ENCODE measurements at regions of chr17 and their contacts with region 1.

Region 1: DNA sequence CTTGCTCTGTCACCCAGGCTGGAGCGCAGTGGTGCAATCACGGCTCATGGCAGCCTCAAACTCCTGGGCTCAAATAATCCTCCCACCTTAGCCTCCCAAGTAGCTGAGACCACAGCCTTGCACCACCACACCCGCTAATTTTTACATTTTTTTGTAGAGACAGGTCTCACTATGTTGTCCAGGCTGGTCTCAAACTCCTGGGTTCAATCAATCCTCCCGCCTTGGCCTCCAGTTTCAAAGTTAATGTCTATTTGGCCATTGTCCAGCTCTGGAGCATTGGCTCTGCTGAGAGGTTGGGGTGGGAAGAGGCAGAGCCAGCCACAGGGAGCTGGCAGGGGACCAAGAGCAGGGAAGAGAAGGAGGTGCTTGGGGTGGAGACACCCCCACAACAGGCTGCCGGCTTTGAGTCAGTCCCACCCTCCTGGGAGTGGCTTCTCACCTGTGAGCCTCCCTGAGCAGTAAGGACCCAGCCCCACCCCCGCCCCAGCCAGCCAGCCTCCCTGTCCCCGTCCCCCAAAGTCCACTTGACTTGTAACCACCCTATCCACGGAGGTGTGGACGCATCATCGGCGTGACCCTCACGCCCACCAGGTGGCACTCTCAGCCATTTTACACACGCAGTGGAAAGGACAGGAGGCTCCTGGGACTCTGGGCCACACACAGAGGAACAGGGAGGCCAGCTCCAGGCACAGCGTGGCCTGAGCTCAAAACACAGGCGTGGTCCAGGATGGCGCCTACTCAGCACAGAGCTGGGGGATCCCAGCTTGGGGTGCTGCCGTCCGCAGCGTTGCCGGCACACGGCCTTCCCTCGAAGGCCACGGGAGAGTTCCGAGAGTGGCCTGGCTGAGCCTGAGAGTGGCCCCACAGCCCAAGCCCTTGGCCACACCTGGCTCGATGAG is 22.8 kb upstream of the PVALEF start:
- DNase-seq: peak; percentile 76 to 91 (median 79)
- ATAC-seq: peak; percentile 100
- H3K4me3 ChIP-seq: no peak overlapping the region
- H3K27ac ChIP-seq: no peak overlapping the region
- H3K4me1 ChIP-seq: peaks cover 9 to 31% of the 10 kb centered on the region in 2 experiments; a peak in 3 of 5 replicates
- H3K27me3 ChIP-seq: peaks cover 0 to 26% of the 10 kb centered on the region in 2 experiments; a peak in 1 of 5 replicates
- CTCF ChIP-seq: peak; percentile 80 to 89 (median 86)
- EP300 ChIP-seq: 0 out of 2 replicates have a peak, but pooled peaks have one; percentile 10
- POLR2A ChIP-seq: no peak
- RAD21 ChIP-seq: peak; percentile 76 to 93

Region 2: DNA sequence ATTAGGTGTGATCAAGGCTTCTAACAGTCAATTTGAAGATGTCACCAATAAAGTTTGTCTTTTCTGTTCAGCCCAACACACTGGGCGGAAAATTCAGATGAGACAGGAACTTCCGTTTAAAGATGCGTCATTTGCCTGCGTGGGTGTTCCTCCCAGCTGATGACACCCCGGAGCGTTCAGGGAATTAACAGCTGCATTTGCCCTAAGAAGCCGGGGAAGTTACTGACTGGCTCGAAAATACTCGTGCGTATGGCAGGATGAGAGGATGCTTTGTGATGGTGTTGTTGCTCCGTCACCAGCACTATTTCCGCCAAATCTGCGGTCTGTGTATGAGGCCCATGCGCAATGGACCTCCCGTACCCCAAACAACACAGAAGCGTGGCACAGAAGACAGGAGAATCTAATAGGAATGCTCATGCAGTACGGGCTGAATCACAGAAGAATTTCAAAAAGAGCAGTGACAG is 10.8 kb after region 1 on chr17:
- CTCF ChIA-PET with region 1: no interaction called
- POLR2A ChIA-PET with region 1: interaction called, 15 read pairs
- in situ Hi-C with region 1: no loop called
- intact Hi-C with region 1: no loop called
- DNase-seq: peak; percentile 66 to 79 (median 74)
- ATAC-seq: peak; percentile 77
- H3K4me3 ChIP-seq: no peak overlapping the region
- H3K27ac ChIP-seq: no peak overlapping the region; the same call in 2 of the 3 replicates
- H3K4me1 ChIP-seq: peaks cover 6 to 34% of the 10 kb centered on the region in 2 experiments; a peak in 3 of 5 replicates
- H3K27me3 ChIP-seq: peaks cover 24 to 62% of the 10 kb centered on the region in 2 experiments; a peak in 4 of 5 replicates
- CTCF ChIP-seq: no peak
- EP300 ChIP-seq: peak; percentile 60
- POLR2A ChIP-seq: no peak
- RAD21 ChIP-seq: no peak

Region 3: GRCh38 chr17:81165246-81166032 is 22.9 kb after region 1 on chr17 and contains the start of gene PVALEF:
- CTCF ChIA-PET with region 1: no interaction called
- POLR2A ChIA-PET with region 1: no interaction called
- in situ Hi-C with region 1: no loop called
- intact Hi-C with region 1: no loop called
- DNase-seq: no peak
- ATAC-seq: no peak; the same call in 2 of the 3 replicates
- H3K4me3 ChIP-seq: no peak within 1 kb of the TSS
- H3K27ac ChIP-seq: no peak within 1 kb of the TSS
- H3K4me1 ChIP-seq: peaks cover 0 to 60% of the 10 kb centered on the region in 2 experiments; a peak in 2 of 5 replicates
- H3K27me3 ChIP-seq: peaks cover 25 to 72% of the 10 kb centered on the region in 2 experiments; a peak in 4 of 5 replicates
- CTCF ChIP-seq: no peak
- EP300 ChIP-seq: no peak
- POLR2A ChIP-seq: no peak
- RAD21 ChIP-seq: no peak
- polyA plus RNA-seq, gene PVALEF: not detected

Region 4: DNA sequence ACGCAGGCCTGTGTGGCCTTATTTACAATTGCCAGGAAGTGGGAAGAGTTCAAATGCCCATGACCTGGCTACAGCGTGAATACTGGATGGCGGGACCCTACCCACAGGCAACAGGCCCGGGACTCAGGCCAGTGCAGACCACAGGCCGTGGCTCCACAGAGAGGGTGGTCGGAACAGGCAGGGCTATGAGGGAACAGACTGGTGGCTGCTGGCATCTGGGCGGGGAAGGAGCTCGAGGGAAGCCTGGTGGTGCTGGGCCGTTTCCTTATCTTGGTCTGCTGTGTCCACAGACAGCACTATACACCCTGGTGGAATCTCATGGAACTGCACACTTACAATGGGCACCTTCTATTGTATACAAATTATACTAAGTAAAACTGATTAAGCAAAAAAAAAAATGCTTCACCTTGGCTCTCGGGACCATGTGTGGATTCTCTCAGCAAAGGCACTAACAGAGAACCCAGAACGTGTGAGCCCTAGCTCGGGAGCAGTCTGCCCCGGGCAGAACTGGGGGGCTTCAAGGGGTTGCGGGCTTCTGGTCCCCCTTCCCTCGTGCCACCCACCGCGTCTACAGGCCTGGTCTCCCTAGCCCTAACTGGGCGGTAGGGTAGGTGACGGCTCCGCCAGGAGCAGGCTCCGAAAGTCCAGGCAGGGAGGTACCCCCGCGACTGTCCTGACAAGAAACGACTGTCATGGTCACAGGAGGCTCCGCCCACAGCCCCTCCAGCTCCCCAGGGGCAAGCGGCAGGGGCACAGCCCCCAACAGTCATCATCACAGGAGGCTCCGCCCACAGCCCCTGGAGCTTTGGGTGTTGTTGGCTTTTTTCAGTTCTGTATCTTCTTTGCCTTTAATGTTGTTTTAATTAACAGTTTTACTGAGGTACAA is 58.4 kb after region 1 on chr17:
- CTCF ChIA-PET with region 1: interaction called, 4 read pairs
- POLR2A ChIA-PET with region 1: interaction called, 3 read pairs
- in situ Hi-C with region 1: no loop called
- intact Hi-C with region 1: loop called (anchors 2 kb)
- DNase-seq: peak; percentile 65 to 82 (median 75)
- ATAC-seq: peak; percentile 98
- H3K4me3 ChIP-seq: no peak overlapping the region
- H3K27ac ChIP-seq: no peak overlapping the region
- H3K4me1 ChIP-seq: peaks cover 3 to 31% of the 10 kb centered on the region in 2 experiments; a peak in 3 of 5 replicates
- H3K27me3 ChIP-seq: no peaks in the 10 kb centered on the region
- CTCF ChIP-seq: peak; percentile 73 to 81 (median 78)
- EP300 ChIP-seq: no peak
- POLR2A ChIP-seq: no peak
- RAD21 ChIP-seq: peak; percentile 41 to 66

Region 5: DNA sequence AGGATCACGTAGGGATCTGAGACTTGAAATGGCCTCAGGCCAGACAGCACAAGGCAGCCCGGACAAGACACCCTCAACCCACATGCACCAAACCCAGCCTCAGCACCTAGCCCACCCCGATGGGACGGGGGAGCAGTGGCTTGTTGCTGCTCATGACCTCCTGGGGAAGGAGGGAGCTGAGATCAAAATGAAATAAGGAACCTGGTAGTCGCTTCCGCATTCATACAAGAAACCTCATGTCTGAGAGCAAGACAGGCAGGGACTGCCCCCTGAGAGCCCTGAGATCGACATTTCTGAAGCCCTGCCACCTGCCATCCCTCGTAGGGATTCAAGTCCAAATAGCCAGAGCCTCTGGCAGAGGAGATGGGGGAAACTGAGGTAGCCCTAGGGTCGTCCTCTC is 85.9 kb after region 1 on chr17:
- CTCF ChIA-PET with region 1: interaction called, 8 read pairs
- POLR2A ChIA-PET with region 1: no interaction called
- in situ Hi-C with region 1: loop called (anchors 25 kb)
- intact Hi-C with region 1: loop called (anchors 5 kb)
- DNase-seq: no peak
- ATAC-seq: no peak
- H3K4me3 ChIP-seq: no peak overlapping the region
- H3K27ac ChIP-seq: no peak overlapping the region
- H3K4me1 ChIP-seq: peaks cover 12 to 42% of the 10 kb centered on the region in 2 experiments
- H3K27me3 ChIP-seq: no peaks in the 10 kb centered on the region
- CTCF ChIP-seq: no peak
- EP300 ChIP-seq: no peak
- POLR2A ChIP-seq: no peak
- RAD21 ChIP-seq: no peak

Region 6: DNA sequence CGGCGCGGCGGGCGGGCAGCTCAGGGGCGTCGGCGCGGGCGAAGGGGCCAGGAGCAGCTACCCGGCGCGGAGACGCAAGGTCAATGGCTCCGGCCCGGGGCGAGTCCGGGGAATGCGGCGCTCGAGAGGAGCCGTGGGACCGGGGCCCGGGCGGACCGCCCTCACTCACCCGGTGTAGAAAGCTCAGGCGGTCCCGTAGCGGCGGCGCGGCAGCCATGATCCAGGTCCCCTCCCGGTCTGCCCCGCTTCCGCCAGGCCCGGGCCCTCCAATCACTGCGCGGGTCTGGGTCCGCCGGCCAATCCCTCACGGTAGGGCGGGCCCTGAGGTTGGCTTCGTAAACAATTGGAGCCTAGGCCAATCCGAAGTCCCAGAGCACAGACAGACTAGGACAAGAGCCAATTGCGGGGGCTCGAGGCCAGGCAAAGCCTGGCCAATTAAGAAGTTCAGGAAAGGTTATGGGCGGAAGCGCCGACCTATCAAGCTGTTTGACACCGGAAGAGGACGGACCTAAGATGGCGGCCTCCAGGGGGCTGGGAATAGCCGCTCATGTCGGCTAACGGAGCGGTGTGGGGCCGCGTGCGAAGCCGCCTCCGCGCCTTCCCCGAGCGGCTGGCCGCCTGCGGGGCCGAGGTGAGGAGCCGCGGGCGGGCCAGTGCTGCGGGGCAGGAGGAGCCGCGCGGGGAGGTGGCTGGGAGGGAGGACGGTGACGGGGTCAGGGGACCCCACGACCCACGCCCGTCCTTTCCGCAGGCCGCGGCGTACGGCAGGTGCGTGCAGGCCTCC is 96.5 kb after region 1 on chr17 and contains the starts of genes NDUFAF8 and TEPSIN:
- CTCF ChIA-PET with region 1: interaction called, 17 read pairs
- POLR2A ChIA-PET with region 1: no interaction called
- in situ Hi-C with region 1: loop called (anchors 25 kb)
- intact Hi-C with region 1: loop called (anchors 1 kb)
- DNase-seq: peak; percentile 97 to 100 (median 98)
- ATAC-seq: peak; percentile 97
- H3K4me3 ChIP-seq: peak within 1 kb of the TSS; percentile 82
- H3K27ac ChIP-seq: peak within 1 kb of the TSS; percentile 82
- H3K4me1 ChIP-seq: peaks cover 28 to 89% of the 10 kb centered on the region in 2 experiments
- H3K27me3 ChIP-seq: no peaks in the 10 kb centered on the region
- CTCF ChIP-seq: no peak
- EP300 ChIP-seq: no peak
- POLR2A ChIP-seq: peak; percentile 75
- RAD21 ChIP-seq: no peak
- polyA plus RNA-seq, gene NDUFAF8: 13.5 to 17.4 TPM
- polyA plus RNA-seq, gene TEPSIN: 0.80 to 0.81 TPM

Region 7: GRCh38 chr17:81440876-81441244 is 298.3 kb after region 1 on chr17:
- CTCF ChIA-PET with region 1: no interaction called
- POLR2A ChIA-PET with region 1: no interaction called
- in situ Hi-C with region 1: no loop called
- intact Hi-C with region 1: no loop called
- DNase-seq: peak; percentile 64 to 89 (median 83)
- ATAC-seq: peak; percentile 92
- H3K4me3 ChIP-seq: no peak overlapping the region
- H3K27ac ChIP-seq: no peak overlapping the region
- H3K4me1 ChIP-seq: peaks cover 0 to 82% of the 10 kb centered on the region in 2 experiments; a peak in 2 of 5 replicates
- H3K27me3 ChIP-seq: no peaks in the 10 kb centered on the region
- CTCF ChIP-seq: peak; percentile 75 to 96 (median 83)
- EP300 ChIP-seq: no peak
- POLR2A ChIP-seq: no peak
- RAD21 ChIP-seq: peak in 1 of 2 experiments; percentile 39; a peak in 2 of 4 replicates

Measured in K562 (cell line).